ENCODE measurements at regions of chr7 and their contacts with region 1.

Region 1: GRCh38 chr7:106598663-106599342 is 62.2 kb downstream of the CCDC71L start:
- H3K4me3 Mint-ChIP-seq: no peak overlapping the region
- H3K27ac Mint-ChIP-seq: peak overlapping the region; percentile 54
- H3K4me1 Mint-ChIP-seq: peaks cover 5% of the 10 kb centered on the region
- H3K27me3 Mint-ChIP-seq: peaks cover 4% of the 10 kb centered on the region

Region 2: DNA sequence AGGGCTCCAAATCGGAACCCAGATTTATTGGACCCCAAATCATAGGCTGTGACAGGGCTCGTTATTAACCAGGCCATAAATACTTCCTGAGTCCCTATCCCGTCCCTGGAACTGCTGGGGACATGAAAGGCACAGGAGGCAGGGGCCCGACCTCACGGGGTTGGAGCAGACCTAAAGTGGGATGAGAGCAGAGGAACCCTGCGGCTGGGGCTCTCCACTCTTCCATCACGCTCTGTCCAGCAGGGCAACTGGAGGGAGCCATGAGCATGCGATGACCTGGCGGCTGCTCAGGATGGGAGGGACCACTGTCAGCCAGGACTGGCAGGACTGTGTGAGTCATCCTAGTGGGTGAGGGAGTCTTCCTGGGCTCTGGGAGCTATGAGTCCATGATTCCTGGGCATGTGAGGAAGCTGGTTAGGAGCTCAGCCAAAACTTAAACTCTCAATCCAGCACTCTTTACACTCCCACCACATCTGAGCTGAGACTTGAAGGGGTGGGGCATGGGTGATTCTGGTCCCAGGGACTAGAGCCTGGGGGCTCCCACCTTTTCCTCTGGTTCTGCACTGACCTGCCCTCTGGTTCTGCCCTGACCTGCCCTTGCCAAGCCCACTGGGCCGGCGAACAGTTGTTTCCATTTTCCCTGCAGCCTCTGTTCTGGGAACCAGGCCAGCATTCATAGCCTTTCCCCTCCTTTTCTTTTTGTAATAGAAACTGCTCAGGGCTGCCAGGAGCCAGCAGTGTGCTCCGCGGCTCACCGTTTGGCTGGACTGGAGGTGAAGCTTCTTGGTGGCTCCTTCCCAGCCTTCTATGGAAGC is 533.8 kb before region 1 on chr7:
- intact Hi-C with region 1: no loop called
- H3K4me3 Mint-ChIP-seq: no peak overlapping the region
- H3K27ac Mint-ChIP-seq: peak overlapping the region; percentile 20
- H3K4me1 Mint-ChIP-seq: peaks cover 33% of the 10 kb centered on the region
- H3K27me3 Mint-ChIP-seq: peaks cover 15% of the 10 kb centered on the region

Region 3: DNA sequence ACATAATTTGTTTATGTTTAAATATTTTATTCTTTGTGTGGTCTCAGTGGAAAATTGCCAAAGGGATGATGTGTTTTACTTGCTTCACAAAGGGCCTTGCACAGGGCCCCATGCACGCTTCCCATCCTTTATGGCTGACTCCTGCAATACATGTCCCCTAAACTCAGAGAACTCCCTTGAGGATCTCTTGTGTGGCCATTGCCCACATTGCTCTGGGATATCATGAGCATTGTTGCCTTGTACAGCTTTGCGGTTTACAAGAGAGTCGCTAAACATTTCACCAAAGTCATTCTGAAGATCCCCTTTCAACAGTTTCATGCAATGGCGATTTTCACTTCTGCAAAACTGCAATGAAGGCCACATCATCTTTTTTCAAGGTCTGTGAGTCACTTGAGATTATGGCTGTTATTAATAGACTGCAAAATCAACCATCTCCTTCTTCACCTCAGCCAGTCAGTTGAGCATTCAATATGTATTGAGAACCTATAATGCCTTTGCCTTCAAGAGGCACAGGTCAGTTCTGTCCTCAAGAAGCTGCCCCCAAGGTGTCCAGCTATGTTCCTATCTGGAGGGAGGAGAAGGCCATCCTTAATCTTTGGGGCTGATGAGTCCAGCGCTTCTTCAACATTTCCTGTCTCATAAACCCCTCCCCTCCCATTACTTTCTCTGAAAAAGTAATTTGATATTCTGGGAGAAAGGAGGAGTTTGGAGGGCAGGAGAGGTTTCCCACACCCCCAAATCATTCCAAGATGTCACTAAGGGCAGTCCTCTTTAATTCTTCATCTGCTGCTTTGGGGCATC is 46.0 kb before region 1 on chr7:
- intact Hi-C with region 1: loop called (anchors 5 kb)
- H3K4me3 Mint-ChIP-seq: no peak overlapping the region
- H3K27ac Mint-ChIP-seq: peak overlapping the region; percentile 96
- H3K4me1 Mint-ChIP-seq: peaks cover 49% of the 10 kb centered on the region
- H3K27me3 Mint-ChIP-seq: peaks cover 5% of the 10 kb centered on the region

Region 4: GRCh38 chr7:106731187-106731586 is 132.4 kb after region 1 on chr7:
- intact Hi-C with region 1: loop called (anchors 2 kb)
- H3K4me3 Mint-ChIP-seq: peak overlapping the region; percentile 4
- H3K27ac Mint-ChIP-seq: peak overlapping the region; percentile 17
- H3K4me1 Mint-ChIP-seq: peaks cover 39% of the 10 kb centered on the region
- H3K27me3 Mint-ChIP-seq: peaks cover 7% of the 10 kb centered on the region

Measured in dendritic cell treated with granulocyte-macrophage colony-stimulating factor and Interleukin-4, amounts not matched to agents 40 ng/mL and 50 ng/mL, for 4 days (primary cell).